ENCODE measurements at regions of chr5 and their contacts with region 1.

Region 1: DNA sequence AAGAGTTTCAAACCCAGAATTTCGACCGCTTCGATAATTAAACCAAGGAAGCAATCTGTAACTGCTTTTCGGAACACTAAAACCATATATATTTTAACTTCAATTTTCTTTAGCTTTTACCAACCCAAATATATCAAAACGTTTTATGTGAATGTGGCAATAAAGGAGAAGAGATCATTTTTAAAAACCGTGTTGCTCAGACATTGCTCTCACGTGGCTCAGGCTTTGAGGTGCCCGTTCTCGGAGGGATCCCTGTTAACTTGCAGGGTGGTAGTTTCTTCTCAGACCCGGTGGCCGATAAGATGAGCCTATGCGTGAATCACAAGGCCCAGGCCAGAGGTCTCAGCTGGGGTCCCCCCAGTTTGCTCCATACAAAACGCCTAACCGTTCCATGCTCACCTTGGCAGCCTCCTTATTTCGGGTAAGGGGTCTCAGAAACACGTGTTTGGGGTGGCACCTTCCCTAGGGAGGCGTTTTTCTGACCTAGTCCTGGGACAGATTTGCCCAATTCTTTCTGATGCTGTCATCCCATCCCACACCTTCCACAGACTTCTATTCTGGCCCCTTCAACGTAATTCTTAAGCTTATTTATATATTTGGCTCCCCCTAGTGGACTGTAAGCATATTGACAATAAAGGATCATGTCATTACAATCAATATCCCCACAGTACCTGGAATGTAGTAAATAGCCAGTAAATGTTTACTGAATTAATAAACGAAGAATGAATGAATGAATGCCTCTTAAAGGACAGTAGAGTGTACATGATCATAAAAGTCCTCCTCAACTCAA is 48.1 kb downstream of the THBS4 start:
- DNase-seq: no peak
- ATAC-seq: peak; percentile 92
- H3K4me3 ChIP-seq: no peak overlapping the region
- H3K27ac ChIP-seq: no peak overlapping the region
- H3K4me1 ChIP-seq: no peaks in the 10 kb centered on the region
- H3K27me3 ChIP-seq: no peaks in the 10 kb centered on the region
- CTCF ChIP-seq: peak; percentile 41 to 69 (median 66); a peak in 5 of 6 replicates
- EP300 ChIP-seq: no peak
- POLR2A ChIP-seq: no peak
- RAD21 ChIP-seq: peak; percentile 81

Region 2: GRCh38 chr5:79560771-79561524 is 522.3 kb before region 1 on chr5:
- CTCF ChIA-PET with region 1: interaction called, 11 read pairs
- POLR2A ChIA-PET with region 1: no interaction called
- RAD21 ChIA-PET with region 1: no interaction called
- SMC1A ChIA-PET with region 1: interaction called, 4 read pairs
- in situ Hi-C with region 1: loop called (anchors 5 kb)
- intact Hi-C with region 1: no loop called
- DNase-seq: peak; percentile 31
- ATAC-seq: peak; percentile 81
- H3K4me3 ChIP-seq: no peak overlapping the region
- H3K27ac ChIP-seq: peak overlapping the region; percentile 76
- H3K4me1 ChIP-seq: peaks cover 10% of the 10 kb centered on the region; the same call in 1 of the 2 replicates
- H3K27me3 ChIP-seq: no peaks in the 10 kb centered on the region
- CTCF ChIP-seq: no peak
- EP300 ChIP-seq: no peak
- POLR2A ChIP-seq: no peak
- RAD21 ChIP-seq: no peak

Region 3: GRCh38 chr5:79857714-79858409 is 225.4 kb before region 1 on chr5:
- CTCF ChIA-PET with region 1: interaction called, 10 read pairs
- POLR2A ChIA-PET with region 1: no interaction called
- RAD21 ChIA-PET with region 1: no interaction called
- SMC1A ChIA-PET with region 1: interaction called, 4 read pairs
- in situ Hi-C with region 1: no loop called
- intact Hi-C with region 1: loop called (anchors 5 kb)
- DNase-seq: peak; percentile 23
- ATAC-seq: peak; percentile 79
- H3K4me3 ChIP-seq: no peak overlapping the region
- H3K27ac ChIP-seq: no peak overlapping the region
- H3K4me1 ChIP-seq: no peaks in the 10 kb centered on the region
- H3K27me3 ChIP-seq: peaks cover 0 to 2% of the 10 kb centered on the region in 2 experiments; a peak in 1 of 4 replicates
- CTCF ChIP-seq: peak; percentile 87 to 98 (median 97)
- EP300 ChIP-seq: no peak
- POLR2A ChIP-seq: no peak
- RAD21 ChIP-seq: peak; percentile 89

Region 4: DNA sequence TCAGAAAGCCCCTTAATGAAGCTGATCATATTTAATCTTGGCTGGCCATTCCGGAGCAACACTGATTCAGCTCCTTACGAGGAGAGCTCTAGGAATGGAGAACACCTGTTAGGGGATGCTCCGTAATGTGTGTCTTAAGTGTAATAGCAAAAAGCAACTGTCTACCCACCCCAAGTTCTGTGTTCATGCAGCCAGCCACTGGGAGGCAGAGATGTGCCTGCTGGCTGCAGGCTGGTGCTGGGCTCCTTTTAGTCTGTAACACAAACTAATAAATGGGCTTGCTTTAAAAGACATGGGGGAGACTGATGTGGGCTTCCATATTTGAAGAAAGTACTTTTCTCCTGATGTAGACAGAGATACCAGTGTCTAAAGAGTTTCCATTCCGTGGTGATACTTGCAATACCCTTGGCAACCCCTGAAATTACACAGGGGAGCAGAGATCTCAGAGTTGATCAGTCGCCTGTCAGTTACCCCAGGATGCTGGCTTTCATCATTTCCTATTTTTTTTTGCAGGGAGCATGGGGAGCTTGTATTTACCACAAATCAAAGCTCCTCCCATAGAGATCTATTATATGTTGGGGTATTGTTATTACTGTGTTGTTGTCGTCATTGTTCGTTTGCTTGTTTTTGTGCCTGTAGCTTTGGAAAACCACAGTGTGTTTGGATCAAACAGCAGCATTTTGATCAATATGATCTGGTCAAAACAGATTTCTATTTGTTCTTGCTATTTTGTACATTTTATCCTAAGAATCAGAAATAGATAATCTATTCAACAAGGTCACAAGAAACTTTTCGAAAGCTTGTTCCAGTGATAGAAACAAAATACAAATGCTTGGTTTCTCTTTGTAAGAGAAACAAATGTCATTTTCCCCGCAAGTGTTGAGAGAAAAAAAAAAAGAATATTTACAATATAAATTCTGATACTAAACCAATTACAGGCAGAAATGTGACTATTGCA is 158.1 kb before region 1 on chr5:
- CTCF ChIA-PET with region 1: interaction called, 6 read pairs
- POLR2A ChIA-PET with region 1: no interaction called
- RAD21 ChIA-PET with region 1: interaction called, 10 read pairs
- SMC1A ChIA-PET with region 1: interaction called, 12 read pairs
- in situ Hi-C with region 1: no loop called
- intact Hi-C with region 1: loop called (anchors 1 kb)
- DNase-seq: no peak
- ATAC-seq: peak; percentile 41; the same call in 2 of the 3 replicates
- H3K4me3 ChIP-seq: no peak overlapping the region
- H3K27ac ChIP-seq: no peak overlapping the region
- H3K4me1 ChIP-seq: no peaks in the 10 kb centered on the region
- H3K27me3 ChIP-seq: peaks cover 0 to 4% of the 10 kb centered on the region in 2 experiments; a peak in 1 of 4 replicates
- CTCF ChIP-seq: peak in 2 of 3 experiments; percentile 16 to 29; a peak in 3 of 6 replicates
- EP300 ChIP-seq: no peak
- POLR2A ChIP-seq: no peak
- RAD21 ChIP-seq: peak; percentile 44

Region 5: GRCh38 chr5:80041527-80041926 is 41.8 kb before region 1 on chr5:
- CTCF ChIA-PET with region 1: interaction called, 28 read pairs
- POLR2A ChIA-PET with region 1: no interaction called
- RAD21 ChIA-PET with region 1: interaction called, 6 read pairs
- SMC1A ChIA-PET with region 1: interaction called, 5 read pairs
- in situ Hi-C with region 1: no loop called
- intact Hi-C with region 1: no loop called
- DNase-seq: no peak
- ATAC-seq: no peak
- H3K4me3 ChIP-seq: no peak overlapping the region
- H3K27ac ChIP-seq: no peak overlapping the region
- H3K4me1 ChIP-seq: no peaks in the 10 kb centered on the region
- H3K27me3 ChIP-seq: no peaks in the 10 kb centered on the region
- CTCF ChIP-seq: no peak
- EP300 ChIP-seq: no peak
- POLR2A ChIP-seq: no peak
- RAD21 ChIP-seq: no peak

Region 6: GRCh38 chr5:80198399-80198798 is 115.1 kb after region 1 on chr5:
- CTCF ChIA-PET with region 1: no interaction called
- POLR2A ChIA-PET with region 1: no interaction called
- RAD21 ChIA-PET with region 1: no interaction called
- SMC1A ChIA-PET with region 1: no interaction called
- in situ Hi-C with region 1: no loop called
- intact Hi-C with region 1: no loop called
- DNase-seq: no peak
- ATAC-seq: no peak
- H3K4me3 ChIP-seq: no peak overlapping the region
- H3K27ac ChIP-seq: no peak overlapping the region
- H3K4me1 ChIP-seq: no peaks in the 10 kb centered on the region
- H3K27me3 ChIP-seq: no peaks in the 10 kb centered on the region
- CTCF ChIP-seq: no peak
- EP300 ChIP-seq: no peak
- POLR2A ChIP-seq: no peak
- RAD21 ChIP-seq: no peak

Region 7: GRCh38 chr5:80308526-80308925 is 225.2 kb after region 1 on chr5:
- CTCF ChIA-PET with region 1: interaction called, 230 read pairs
- POLR2A ChIA-PET with region 1: no interaction called
- RAD21 ChIA-PET with region 1: interaction called, 8 read pairs
- SMC1A ChIA-PET with region 1: interaction called, 146 read pairs
- in situ Hi-C with region 1: no loop called
- intact Hi-C with region 1: no loop called
- DNase-seq: no peak
- ATAC-seq: no peak
- H3K4me3 ChIP-seq: no peak overlapping the region
- H3K27ac ChIP-seq: no peak overlapping the region
- H3K4me1 ChIP-seq: no peaks in the 10 kb centered on the region
- H3K27me3 ChIP-seq: no peaks in the 10 kb centered on the region; a peak in 1 of 4 replicates
- CTCF ChIP-seq: no peak
- EP300 ChIP-seq: no peak
- POLR2A ChIP-seq: no peak
- RAD21 ChIP-seq: no peak

Measured in GM12878 (cell line).